ENCODE measurements at regions of chr6 and their contacts with region 1.

Region 1: DNA sequence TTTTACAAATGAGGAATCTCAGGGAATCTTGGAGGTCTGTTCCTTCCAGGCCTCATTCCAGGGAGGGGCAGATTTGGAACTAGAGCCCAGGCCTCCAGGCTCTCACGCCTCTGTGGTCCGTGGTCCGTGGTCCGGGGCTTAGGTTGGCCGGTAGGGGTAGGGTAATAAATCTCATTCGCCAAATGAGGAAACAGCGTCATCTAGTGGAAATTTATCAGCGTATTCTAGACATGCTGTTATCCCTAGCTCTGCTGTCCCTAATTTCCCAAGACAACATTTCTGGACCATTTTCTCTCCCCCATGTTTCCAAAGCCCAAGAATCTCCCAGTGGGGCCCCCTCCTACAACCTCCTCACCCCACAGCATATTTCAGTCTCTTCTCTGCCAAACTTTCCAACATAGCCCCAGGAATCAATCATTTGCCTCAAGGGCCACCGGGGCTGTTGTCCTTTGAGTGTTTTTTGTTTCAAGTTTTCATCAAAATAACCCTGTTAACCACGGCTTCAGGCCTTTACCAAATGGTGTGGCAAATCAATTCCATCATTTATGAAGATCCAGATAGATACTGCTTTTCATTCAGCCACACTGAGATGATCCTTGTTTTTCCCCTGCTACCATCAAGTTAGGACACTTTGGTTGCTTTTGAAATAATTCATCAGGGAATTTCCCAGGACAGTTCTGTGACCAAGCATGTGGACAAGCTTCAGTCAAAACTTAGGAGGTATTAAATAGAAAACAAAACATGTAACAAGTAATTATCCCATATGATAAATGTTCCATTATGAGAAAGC is 126.8 kb downstream of the ALDH8A1 start:
- DNase-seq: peak in 4 of 5 donors; percentile 28 to 55 (median 38)
- ATAC-seq: peak; percentile 84 to 92 (median 90)
- H3K4me3 ChIP-seq: no peak overlapping the region
- H3K27ac ChIP-seq: no peak overlapping the region
- H3K4me1 ChIP-seq: peaks cover 0 to 19% (median 1%) of the 10 kb centered on the region in 12 donors
- H3K27me3 ChIP-seq: no peaks in the 10 kb centered on the region
- CTCF ChIP-seq: peak; percentile 85 to 94 (median 88)
- POLR2A ChIP-seq: no peak

Region 2: GRCh38 chr6:134161036-134161435 is 662.1 kb before region 1 on chr6:
- intact Hi-C with region 1: loop called in 6 of 10 experiments (anchors 1 to 5 kb)
- DNase-seq: no peak
- ATAC-seq: no peak
- H3K4me3 ChIP-seq: no peak overlapping the region
- H3K27ac ChIP-seq: no peak overlapping the region
- H3K4me1 ChIP-seq: no peaks in the 10 kb centered on the region
- H3K27me3 ChIP-seq: no peaks in the 10 kb centered on the region
- CTCF ChIP-seq: no peak
- POLR2A ChIP-seq: no peak

Region 3: GRCh38 chr6:134537146-134537555 is 286.0 kb before region 1 on chr6:
- intact Hi-C with region 1: loop called in 1 of 10 experiments (anchors 10 kb)
- DNase-seq: no peak
- ATAC-seq: no peak
- H3K4me3 ChIP-seq: no peak overlapping the region
- H3K27ac ChIP-seq: no peak overlapping the region
- H3K4me1 ChIP-seq: peaks cover 3 to 38% (median 14%) of the 10 kb centered on the region in 12 donors
- H3K27me3 ChIP-seq: no peaks in the 10 kb centered on the region
- CTCF ChIP-seq: no peak
- POLR2A ChIP-seq: no peak

Region 4: DNA sequence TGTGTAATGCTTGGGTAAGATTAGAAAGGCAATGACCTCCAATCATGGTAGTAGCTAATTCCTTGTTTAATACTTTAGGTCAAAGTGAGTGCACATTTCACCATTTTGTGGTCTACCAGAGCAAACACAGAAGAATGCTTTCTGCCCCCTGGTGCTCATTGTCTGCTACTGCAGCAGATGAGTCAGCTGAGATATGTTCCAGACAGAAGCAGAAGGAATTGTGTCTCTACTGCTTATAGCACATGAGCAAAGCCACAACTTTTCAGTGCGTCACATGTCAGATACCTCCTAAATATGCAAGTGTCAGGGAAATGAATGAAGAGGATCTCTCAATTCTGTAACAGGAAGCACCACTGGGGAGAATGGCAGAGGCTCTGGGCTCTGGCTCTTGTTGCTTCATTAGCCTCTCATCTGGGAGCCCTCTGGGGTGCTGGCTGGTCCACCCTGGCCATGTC is 182.1 kb before region 1 on chr6:
- intact Hi-C with region 1: loop called in 8 of 10 experiments (anchors 5 to 10 kb)
- DNase-seq: peak; percentile 67 to 78 (median 77)
- ATAC-seq: peak; percentile 85 to 92 (median 89)
- H3K4me3 ChIP-seq: no peak overlapping the region
- H3K27ac ChIP-seq: peak overlapping the region in 3 of 12 donors; percentile 9 to 53 (median 36)
- H3K4me1 ChIP-seq: peaks cover 0 to 27% (median 6%) of the 10 kb centered on the region in 12 donors
- H3K27me3 ChIP-seq: no peaks in the 10 kb centered on the region
- CTCF ChIP-seq: peak; percentile 89 to 99 (median 94)
- POLR2A ChIP-seq: no peak

Region 5: DNA sequence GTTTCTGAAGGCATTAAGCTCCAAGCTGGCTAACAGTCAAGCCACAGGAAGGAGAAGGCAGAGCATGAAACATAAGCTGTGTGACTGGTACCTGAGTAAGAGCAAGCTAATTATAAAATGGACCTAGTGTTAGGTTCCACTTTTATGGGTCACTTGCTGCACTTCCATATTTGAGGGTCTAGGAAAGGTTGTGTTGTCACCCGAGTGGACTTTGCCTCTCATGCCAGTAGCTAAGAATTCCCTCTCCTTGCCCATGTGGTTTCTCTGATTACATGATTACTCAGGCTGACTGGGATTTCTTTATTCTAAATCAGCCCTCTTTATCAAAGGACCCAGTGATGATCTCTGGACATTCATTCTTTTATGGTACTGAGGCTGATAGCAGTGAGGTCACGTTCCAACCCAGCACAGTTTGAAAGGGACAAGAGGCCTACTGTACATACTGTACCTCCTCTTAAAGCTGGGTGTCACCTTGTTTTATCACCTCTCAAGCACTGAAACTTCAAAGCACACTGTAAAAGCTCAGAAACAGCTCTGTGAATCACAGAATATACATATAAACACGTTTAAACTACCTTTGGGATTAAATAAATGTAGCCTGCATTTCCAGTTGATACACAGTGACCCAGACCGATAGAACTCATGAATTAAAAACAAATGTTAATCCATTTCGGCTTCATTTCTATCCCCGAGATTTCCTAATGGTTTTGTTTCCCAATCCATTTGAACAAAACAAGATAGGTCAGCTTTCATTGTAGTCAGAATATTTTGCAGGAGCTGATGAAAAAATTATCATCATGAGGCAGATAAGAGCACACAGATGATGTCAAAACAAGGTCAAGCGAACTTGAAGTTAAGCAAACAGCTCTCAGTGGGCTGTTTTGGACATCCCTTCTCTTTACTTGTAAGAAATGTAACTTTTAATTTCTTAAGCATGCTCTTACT is 30.3 kb after region 1 on chr6:
- intact Hi-C with region 1: no loop called
- DNase-seq: no peak
- ATAC-seq: no peak
- H3K4me3 ChIP-seq: no peak overlapping the region
- H3K27ac ChIP-seq: no peak overlapping the region
- H3K4me1 ChIP-seq: peaks cover 0 to 15% (median 0%) of the 10 kb centered on the region in 12 donors
- H3K27me3 ChIP-seq: no peaks in the 10 kb centered on the region
- CTCF ChIP-seq: no peak
- POLR2A ChIP-seq: no peak

Region 6: GRCh38 chr6:134882426-134883038 is 59.4 kb after region 1 on chr6:
- intact Hi-C with region 1: loop called in 4 of 10 experiments (anchors 1 to 5 kb)
- DNase-seq: peak in 4 of 5 donors; percentile 21 to 67 (median 49)
- ATAC-seq: peak in 3 of 4 donors; percentile 36 to 68 (median 65)
- H3K4me3 ChIP-seq: no peak overlapping the region
- H3K27ac ChIP-seq: no peak overlapping the region
- H3K4me1 ChIP-seq: peaks cover 0 to 5% (median 0%) of the 10 kb centered on the region in 12 donors
- H3K27me3 ChIP-seq: peaks cover 0 to 3% (median 0%) of the 10 kb centered on the region in 9 donors
- CTCF ChIP-seq: peak; percentile 52 to 99 (median 88)
- POLR2A ChIP-seq: no peak